Activated B cell treated with CpG ODN at 0.5 μM for 24 hours (primary cell): ENCODE measurements at regions of chr13 and their contacts with region 1.

Region 1: DNA sequence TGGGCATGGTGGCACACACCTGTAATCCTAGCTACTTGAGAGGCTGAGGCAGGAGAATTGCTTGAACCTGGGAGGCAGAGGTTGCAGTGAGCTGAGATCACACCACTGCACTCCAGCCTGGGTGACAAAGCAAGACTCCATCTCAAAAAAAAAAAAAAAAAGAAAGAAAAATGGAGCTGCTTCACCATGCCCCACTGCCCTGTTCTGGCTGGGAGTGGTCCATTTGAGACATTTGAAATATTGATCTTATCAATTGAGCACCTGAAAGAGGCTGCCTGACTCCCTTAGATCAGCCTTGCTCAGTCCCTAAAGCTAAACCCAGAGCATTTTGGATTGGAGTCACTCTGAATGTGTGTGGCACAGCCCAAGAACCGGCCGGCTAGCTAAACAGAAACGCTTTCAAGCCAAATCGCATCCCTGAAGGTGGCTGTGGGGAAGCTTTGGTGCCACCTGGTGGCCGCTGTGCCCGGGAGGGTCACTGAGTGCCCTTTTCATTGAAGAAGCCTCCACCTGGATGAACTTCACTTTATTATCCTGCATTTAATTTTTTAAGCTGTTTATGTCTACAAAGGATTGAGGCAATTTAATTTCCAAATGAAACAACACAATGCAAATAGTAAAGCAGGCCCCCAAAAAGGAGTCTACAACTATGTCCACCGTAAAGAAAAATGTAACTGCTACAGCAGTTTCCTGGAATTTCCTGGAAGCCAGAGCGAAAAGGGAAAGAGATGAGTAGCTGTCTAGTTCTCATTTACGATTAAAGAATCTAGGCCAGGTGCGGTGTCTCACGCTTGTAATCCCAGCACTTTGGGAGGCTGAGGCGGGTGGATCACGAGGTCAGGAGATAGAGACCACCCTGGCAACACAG is 53.1 kb upstream of the SERPINE3 start:
- DNase-seq: peak; percentile 65
- ATAC-seq: peak; percentile 71
- H3K4me3 Mint-ChIP-seq: no peak overlapping the region
- H3K27ac Mint-ChIP-seq: no peak overlapping the region
- H3K4me1 Mint-ChIP-seq: peaks cover 2% of the 10 kb centered on the region
- H3K27me3 Mint-ChIP-seq: peaks cover 4% of the 10 kb centered on the region
- CTCF ChIP-seq: peak; percentile 67

Region 2: DNA sequence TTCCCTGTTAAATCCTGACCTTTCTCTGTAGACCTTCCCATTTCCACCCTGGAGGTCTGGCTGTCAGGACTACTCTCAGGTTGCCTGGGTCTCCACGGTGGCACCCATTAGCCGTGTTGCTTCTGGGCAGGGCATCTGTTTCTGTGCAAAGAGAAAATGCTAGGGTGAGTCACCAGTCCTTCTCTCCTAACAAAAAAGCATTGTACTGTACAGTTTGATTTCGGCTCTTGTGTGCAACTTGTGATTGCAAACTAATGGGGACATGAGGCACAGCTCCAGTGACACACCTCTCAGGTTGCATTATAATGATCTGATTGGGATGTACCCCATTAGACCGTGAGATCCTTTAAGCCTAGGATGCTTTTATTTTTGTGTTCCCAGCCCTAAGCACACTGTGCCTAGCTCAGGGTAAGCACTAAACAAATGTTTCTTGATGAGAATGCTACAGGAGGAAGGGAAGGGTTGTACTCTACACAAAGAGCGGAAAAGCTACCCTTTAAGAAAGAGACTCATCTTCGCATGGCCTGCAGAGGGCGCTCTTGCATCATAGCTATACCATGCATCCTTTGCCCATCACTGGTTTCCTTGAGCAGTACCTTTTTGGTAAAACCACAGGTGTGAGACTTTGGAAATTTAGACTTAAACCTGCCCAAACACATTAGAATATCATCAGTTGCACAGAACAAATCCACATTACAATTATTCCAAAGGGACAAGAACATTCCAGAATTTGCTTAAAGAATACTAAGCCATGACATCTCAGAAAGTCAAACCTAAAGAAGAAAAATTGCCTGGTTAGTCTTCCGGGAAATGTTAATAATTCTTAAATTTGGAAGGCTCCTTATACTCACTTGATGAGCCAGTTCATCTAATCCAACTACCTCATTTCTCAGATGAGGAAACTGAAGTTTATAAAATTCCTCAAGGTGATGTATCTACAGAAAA is 1309.8 kb before region 1 on chr13:
- CTCF ChIA-PET with region 1: interaction called, 7 read pairs
- POLR2A ChIA-PET with region 1: no interaction called
- intact Hi-C with region 1: loop called (anchors 10 kb)
- DNase-seq: peak; percentile 57
- ATAC-seq: peak; percentile 86
- H3K4me3 Mint-ChIP-seq: no peak overlapping the region
- H3K27ac Mint-ChIP-seq: no peak overlapping the region
- H3K4me1 Mint-ChIP-seq: peaks cover 2% of the 10 kb centered on the region
- H3K27me3 Mint-ChIP-seq: no peaks in the 10 kb centered on the region
- CTCF ChIP-seq: no peak

Region 3: GRCh38 chr13:51083706-51084105 is 202.7 kb before region 1 on chr13:
- CTCF ChIA-PET with region 1: no interaction called
- POLR2A ChIA-PET with region 1: no interaction called
- intact Hi-C with region 1: no loop called
- DNase-seq: no peak
- ATAC-seq: no peak
- H3K4me3 Mint-ChIP-seq: no peak overlapping the region
- H3K27ac Mint-ChIP-seq: no peak overlapping the region
- H3K4me1 Mint-ChIP-seq: no peaks in the 10 kb centered on the region
- H3K27me3 Mint-ChIP-seq: no peaks in the 10 kb centered on the region
- CTCF ChIP-seq: no peak

Region 4: GRCh38 chr13:51148952-51149573 is 137.3 kb before region 1 on chr13:
- CTCF ChIA-PET with region 1: interaction called, 13 read pairs
- POLR2A ChIA-PET with region 1: no interaction called
- intact Hi-C with region 1: no loop called
- DNase-seq: no peak
- ATAC-seq: no peak
- H3K4me3 Mint-ChIP-seq: no peak overlapping the region
- H3K27ac Mint-ChIP-seq: no peak overlapping the region
- H3K4me1 Mint-ChIP-seq: no peaks in the 10 kb centered on the region
- H3K27me3 Mint-ChIP-seq: peaks cover 21% of the 10 kb centered on the region
- CTCF ChIP-seq: no peak

Region 5: DNA sequence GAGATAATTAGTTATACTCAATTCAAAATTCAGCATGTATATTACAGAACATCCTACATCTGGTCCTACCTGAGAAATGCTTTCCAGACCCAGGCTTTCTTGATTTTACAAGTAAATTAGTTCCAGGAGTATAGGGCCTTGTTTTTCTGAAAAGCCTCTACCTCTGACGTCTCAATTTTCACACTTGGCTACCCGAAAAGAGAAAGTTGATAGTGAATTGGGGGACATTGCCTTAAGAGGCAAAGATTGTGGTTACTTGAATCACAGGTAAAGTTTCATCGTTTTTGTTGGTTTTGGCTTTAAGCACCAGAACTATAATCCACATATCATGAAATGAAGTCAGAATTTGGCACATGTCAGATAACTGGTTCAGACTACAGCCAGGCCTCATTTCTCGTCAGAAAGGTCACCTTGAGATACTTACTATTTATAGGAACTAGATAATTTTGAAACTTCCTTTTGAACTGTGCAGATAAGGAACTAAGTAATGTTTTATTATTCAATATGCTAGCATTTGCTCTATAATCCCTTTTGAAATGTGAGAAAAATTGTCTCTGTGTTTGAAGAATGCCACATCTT is 33.3 kb before region 1 on chr13:
- CTCF ChIA-PET with region 1: interaction called, 5 read pairs
- POLR2A ChIA-PET with region 1: no interaction called
- intact Hi-C with region 1: loop called (anchors 1 kb)
- DNase-seq: no peak
- ATAC-seq: no peak
- H3K4me3 Mint-ChIP-seq: peak overlapping the region; percentile 21
- H3K27ac Mint-ChIP-seq: peak overlapping the region; percentile 43
- H3K4me1 Mint-ChIP-seq: peaks cover 19% of the 10 kb centered on the region
- H3K27me3 Mint-ChIP-seq: no peaks in the 10 kb centered on the region
- CTCF ChIP-seq: no peak

Region 6: GRCh38 chr13:51416107-51416506 is 129.7 kb after region 1 on chr13:
- CTCF ChIA-PET with region 1: no interaction called
- POLR2A ChIA-PET with region 1: no interaction called
- intact Hi-C with region 1: no loop called
- DNase-seq: no peak
- ATAC-seq: peak; percentile 45
- H3K4me3 Mint-ChIP-seq: peak overlapping the region; percentile 44
- H3K27ac Mint-ChIP-seq: peak overlapping the region; percentile 76
- H3K4me1 Mint-ChIP-seq: peaks cover 69% of the 10 kb centered on the region
- H3K27me3 Mint-ChIP-seq: no peaks in the 10 kb centered on the region
- CTCF ChIP-seq: no peak

Region 7: DNA sequence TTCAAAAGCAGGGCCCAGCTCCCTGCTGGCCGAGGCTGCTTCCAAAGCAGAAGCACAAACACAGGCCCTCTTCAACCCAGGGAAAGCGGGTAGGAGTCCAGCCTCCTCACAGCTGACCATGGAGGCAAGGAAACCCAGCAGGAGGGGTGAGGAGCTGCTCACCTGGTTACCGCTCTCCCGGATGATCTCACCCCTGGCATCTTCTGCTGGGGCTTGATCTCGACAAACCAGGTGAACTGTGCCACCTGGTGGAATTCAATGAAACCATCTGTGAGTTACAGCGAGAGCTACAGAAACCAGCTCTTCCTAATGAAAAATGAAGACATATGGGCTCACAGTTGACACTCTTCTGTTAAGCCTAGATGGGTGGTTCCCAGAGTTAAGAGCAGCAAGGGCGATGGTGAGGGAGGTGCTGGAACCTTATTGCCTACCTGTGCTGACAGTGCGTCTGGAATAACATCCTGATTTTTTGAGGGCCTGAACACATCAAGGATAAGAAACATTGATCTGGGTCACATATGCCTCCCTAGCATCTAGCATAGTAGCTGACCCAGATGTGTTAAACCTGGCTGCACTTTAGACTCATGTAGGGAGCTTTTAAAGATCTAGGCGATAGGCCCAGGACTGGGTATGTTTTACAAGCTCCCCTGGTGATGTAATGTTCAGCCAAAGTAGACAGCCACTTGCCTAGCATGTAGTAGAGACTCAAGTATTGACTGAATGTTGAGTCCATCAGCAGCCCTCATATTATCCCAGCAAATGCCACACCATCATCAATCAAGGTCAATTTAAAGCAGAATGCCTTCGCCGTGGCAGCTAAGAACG is 511.5 kb after region 1 on chr13:
- CTCF ChIA-PET with region 1: interaction called, 21 read pairs
- POLR2A ChIA-PET with region 1: no interaction called
- intact Hi-C with region 1: loop called (anchors 1 kb)
- DNase-seq: no peak
- ATAC-seq: peak; percentile 45
- H3K4me3 Mint-ChIP-seq: no peak overlapping the region
- H3K27ac Mint-ChIP-seq: no peak overlapping the region
- H3K4me1 Mint-ChIP-seq: peaks cover 47% of the 10 kb centered on the region
- H3K27me3 Mint-ChIP-seq: no peaks in the 10 kb centered on the region
- CTCF ChIP-seq: no peak